ENCODE measurements at regions of chr4 and their contacts with region 1.

Region 1: GRCh38 chr4:165464813-165465381 is 86.1 kb downstream of the CPE start:
- DNase-seq: no peak
- H3K4me3 Mint-ChIP-seq: no peak overlapping the region
- H3K27ac Mint-ChIP-seq: no peak overlapping the region
- H3K4me1 Mint-ChIP-seq: no peaks in the 10 kb centered on the region
- H3K27me3 Mint-ChIP-seq: peaks cover 6% of the 10 kb centered on the region

Region 2: DNA sequence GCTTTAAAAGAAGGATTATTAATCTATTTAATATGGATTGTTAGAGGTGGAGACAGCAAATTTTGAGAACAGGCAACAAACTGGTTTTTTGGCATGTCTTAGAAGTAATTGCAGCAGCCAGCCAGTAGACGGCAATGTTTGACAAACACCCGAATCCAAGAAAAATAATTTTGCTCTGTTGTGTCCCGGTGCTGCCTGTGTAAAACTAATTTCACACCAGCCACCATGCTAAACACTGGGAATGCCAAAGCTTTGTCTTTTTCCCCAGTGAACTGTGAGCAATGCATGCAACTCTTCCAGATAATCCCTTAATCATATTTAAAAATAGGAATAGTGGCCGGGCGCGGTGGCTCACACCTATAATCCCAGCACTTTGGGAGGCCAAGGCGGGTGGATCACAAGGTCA is 685.1 kb before region 1 on chr4:
- intact Hi-C with region 1: loop called (anchors 10 kb)
- DNase-seq: no peak
- H3K4me3 Mint-ChIP-seq: no peak overlapping the region
- H3K27ac Mint-ChIP-seq: no peak overlapping the region
- H3K4me1 Mint-ChIP-seq: no peaks in the 10 kb centered on the region
- H3K27me3 Mint-ChIP-seq: no peaks in the 10 kb centered on the region

Region 3: GRCh38 chr4:165112368-165113139 is 352.3 kb before region 1 on chr4 and contains the start of gene TMEM192:
- intact Hi-C with region 1: loop called (anchors 5 kb)
- DNase-seq: peak; percentile 87
- H3K4me3 Mint-ChIP-seq: peak within 1 kb of the TSS; percentile 92
- H3K27ac Mint-ChIP-seq: peak within 1 kb of the TSS; percentile 85
- H3K4me1 Mint-ChIP-seq: peaks cover 9% of the 10 kb centered on the region
- H3K27me3 Mint-ChIP-seq: peaks cover 16% of the 10 kb centered on the region
- total RNA-seq, gene TMEM192: 13.4 and 14.4 TPM in 2 replicates

Region 4: GRCh38 chr4:165131247-165131832 is 333.6 kb before region 1 on chr4:
- intact Hi-C with region 1: loop called (anchors 1 kb)
- DNase-seq: peak; percentile 59
- H3K4me3 Mint-ChIP-seq: no peak overlapping the region
- H3K27ac Mint-ChIP-seq: no peak overlapping the region
- H3K4me1 Mint-ChIP-seq: peaks cover 12% of the 10 kb centered on the region
- H3K27me3 Mint-ChIP-seq: peaks cover 21% of the 10 kb centered on the region

Region 5: DNA sequence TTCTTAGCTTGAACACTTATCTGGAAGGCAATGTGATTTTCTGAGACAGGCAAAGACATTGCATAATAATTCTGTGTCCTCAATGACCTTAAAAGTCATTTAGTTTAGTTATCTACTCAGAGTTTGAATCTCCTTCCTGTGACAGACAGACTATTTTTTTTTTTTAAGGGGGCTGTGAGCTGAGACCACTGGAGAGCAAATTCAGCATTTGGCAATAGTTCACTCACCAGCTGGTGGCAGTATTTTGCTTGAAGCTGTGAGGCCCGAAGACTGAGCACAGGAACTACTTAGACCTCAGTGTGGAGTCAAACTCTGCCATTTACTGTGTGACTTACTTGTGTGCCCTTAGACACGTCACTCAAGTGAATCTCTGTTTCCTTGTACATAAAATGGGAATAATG is 109.0 kb before region 1 on chr4:
- intact Hi-C with region 1: loop called (anchors 5 kb)
- DNase-seq: no peak
- H3K4me3 Mint-ChIP-seq: no peak overlapping the region
- H3K27ac Mint-ChIP-seq: no peak overlapping the region
- H3K4me1 Mint-ChIP-seq: no peaks in the 10 kb centered on the region
- H3K27me3 Mint-ChIP-seq: peaks cover 37% of the 10 kb centered on the region